ENCODE measurements at regions of chr1 and their contacts with region 1.

Region 1: GRCh38 chr1:171984850-171985485 is 143.7 kb downstream of the DNM3 start:
- DNase-seq: peak in 1 of 2 experiments; percentile 24
- H3K4me3 ChIP-seq: no peak overlapping the region
- H3K4me3 Mint-ChIP-seq: no peak overlapping the region
- H3K27ac Mint-ChIP-seq: no peak overlapping the region
- H3K4me1 ChIP-seq: no peaks in the 10 kb centered on the region; the same call in 1 of the 2 replicates
- H3K4me1 Mint-ChIP-seq: peaks cover 1% of the 10 kb centered on the region
- H3K27me3 ChIP-seq: no peaks in the 10 kb centered on the region
- H3K27me3 Mint-ChIP-seq: peaks cover 3% of the 10 kb centered on the region
- CTCF ChIP-seq: peak; percentile 71 to 84

Region 2: DNA sequence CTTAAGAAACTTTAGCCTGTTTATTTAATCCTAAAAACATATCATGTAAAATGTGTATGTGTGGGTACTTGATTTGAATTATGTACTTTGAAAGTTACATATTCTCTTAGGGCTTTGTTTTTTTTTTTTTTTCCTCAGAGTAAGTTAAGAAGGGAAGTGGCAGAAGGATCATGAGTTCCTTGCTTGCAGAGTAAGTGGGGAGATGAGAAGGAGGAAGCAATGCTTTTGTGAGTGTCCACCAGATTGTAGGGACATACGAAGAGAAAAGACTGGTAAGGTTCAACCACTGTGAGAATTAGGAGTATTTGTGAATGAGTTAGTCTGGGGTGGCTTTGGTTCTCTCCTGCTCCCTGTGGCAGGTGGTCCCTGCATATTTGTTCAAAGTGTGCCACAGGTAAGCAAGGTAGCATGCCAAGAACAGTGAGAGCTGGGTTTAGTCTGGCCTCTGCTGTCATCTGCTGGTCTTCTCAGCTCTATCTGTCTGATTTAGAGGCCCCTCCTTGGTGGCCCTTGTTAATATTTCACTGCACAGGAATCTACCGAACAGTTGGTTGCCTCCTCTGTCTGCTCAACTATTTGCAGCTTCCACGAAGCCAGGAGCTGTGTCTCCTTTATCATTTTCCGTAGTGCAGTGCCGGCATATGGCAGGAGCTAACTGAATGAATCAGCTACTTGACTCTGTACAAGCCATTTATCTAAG is 134.2 kb before region 1 on chr1:
- CTCF ChIA-PET with region 1: no interaction called
- POLR2A ChIA-PET with region 1: no interaction called
- intact Hi-C with region 1: loop called (anchors 2 kb)
- DNase-seq: peak; percentile 36 to 51
- H3K4me3 ChIP-seq: no peak overlapping the region
- H3K4me3 Mint-ChIP-seq: no peak overlapping the region
- H3K27ac Mint-ChIP-seq: no peak overlapping the region
- H3K4me1 ChIP-seq: no peaks in the 10 kb centered on the region
- H3K4me1 Mint-ChIP-seq: no peaks in the 10 kb centered on the region
- H3K27me3 ChIP-seq: no peaks in the 10 kb centered on the region
- H3K27me3 Mint-ChIP-seq: peaks cover 10% of the 10 kb centered on the region
- CTCF ChIP-seq: peak in 1 of 2 experiments; percentile 42

Region 3: DNA sequence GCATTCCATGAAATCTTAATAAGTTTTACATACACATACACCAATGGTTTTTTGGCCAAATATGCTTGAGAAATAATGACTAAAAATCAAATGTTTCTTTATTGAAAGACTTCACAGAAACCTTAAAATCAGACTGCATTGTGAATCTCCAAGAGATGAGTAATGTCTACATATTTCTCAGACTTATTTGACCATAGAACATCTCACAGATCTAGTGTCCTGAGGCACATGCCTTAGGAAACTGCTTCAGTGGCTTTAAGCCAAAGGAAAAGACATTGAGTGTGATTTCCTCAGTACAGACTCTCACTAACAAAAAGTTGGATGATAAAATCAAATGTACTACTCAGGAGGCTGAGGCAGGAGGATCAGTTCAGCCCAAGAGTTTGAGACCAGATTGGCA is 429.4 kb after region 1 on chr1:
- CTCF ChIA-PET with region 1: no interaction called
- POLR2A ChIA-PET with region 1: no interaction called
- intact Hi-C with region 1: no loop called
- DNase-seq: no peak
- H3K4me3 ChIP-seq: no peak overlapping the region
- H3K4me3 Mint-ChIP-seq: no peak overlapping the region
- H3K27ac Mint-ChIP-seq: no peak overlapping the region
- H3K4me1 ChIP-seq: peaks cover 9% of the 10 kb centered on the region; the same call in 1 of the 2 replicates
- H3K4me1 Mint-ChIP-seq: peaks cover 8% of the 10 kb centered on the region
- H3K27me3 ChIP-seq: no peaks in the 10 kb centered on the region
- H3K27me3 Mint-ChIP-seq: no peaks in the 10 kb centered on the region
- CTCF ChIP-seq: no peak

Measured in Caco-2 (cell line).